Activated CD4-positive, alpha-beta T cell treated with anti-CD3 and anti-CD28 coated beads, Interleukin-2, amount 10 ng/mL, durations not matched to agents 7 days and 5 days (primary cell): ENCODE measurements at regions of chr19 and their contacts with region 1.

Region 1: DNA sequence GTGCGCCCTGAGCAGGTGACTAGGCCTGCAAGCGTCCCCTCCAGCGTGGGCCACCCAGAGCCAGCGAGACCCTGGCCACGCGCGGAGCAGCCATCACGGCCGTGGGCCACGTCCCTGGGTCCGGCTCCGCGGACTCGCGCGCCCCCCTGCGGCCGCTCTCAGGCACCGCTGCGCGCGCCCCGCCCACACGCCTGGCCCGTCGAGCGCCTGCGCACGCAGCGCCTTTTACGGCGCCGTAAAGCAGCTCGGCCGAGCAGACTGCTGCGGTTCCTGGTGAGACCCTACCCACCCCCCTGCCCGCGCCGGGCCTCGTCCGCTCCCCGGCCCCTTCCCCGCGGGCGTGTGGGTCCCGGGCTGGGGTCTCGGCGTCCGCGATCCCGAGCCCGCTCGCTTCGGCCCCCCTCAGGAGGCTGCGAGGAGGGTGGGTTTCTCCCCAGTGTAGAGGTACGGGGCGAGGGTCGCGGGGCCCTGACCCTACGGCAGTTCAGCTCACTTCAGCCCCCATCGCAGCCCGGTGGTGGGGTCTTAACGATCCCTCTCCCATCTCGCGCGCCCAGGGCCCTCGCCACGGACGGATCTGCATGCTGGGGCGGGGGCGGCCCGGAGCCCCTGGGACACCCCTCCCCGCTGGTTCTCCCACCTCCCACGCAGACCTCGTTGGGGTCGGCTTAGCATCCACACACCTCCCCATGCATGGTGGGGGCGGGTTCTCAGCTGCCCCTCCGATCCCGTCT is at the start of gene TRAPPC5:
- DNase-seq: peak; percentile 84
- H3K4me3 Mint-ChIP-seq: peak within 1 kb of the TSS; percentile 89
- H3K27ac Mint-ChIP-seq: peak within 1 kb of the TSS; percentile 96
- H3K4me1 Mint-ChIP-seq: peaks cover 51% of the 10 kb centered on the region
- H3K27me3 Mint-ChIP-seq: peaks cover 17% of the 10 kb centered on the region
- total RNA-seq, gene TRAPPC5: 105 to 106 TPM

Region 2: GRCh38 chr19:7562646-7563393 is 118.0 kb before region 1 on chr19:
- CTCF ChIA-PET with region 1: interaction called, 15 read pairs
- POLR2A ChIA-PET with region 1: interaction called, 3 read pairs
- DNase-seq: no peak
- H3K4me3 Mint-ChIP-seq: no peak overlapping the region
- H3K27ac Mint-ChIP-seq: no peak overlapping the region
- H3K4me1 Mint-ChIP-seq: peaks cover 4% of the 10 kb centered on the region
- H3K27me3 Mint-ChIP-seq: no peaks in the 10 kb centered on the region

Region 3: GRCh38 chr19:7661744-7662538 is 18.8 kb before region 1 on chr19:
- CTCF ChIA-PET with region 1: interaction called, 13 read pairs
- POLR2A ChIA-PET with region 1: no interaction called
- DNase-seq: no peak
- H3K4me3 Mint-ChIP-seq: no peak overlapping the region
- H3K27ac Mint-ChIP-seq: no peak overlapping the region
- H3K4me1 Mint-ChIP-seq: peaks cover 21% of the 10 kb centered on the region
- H3K27me3 Mint-ChIP-seq: peaks cover 3% of the 10 kb centered on the region

Region 4: GRCh38 chr19:7705387-7706187 is 24.8 kb after region 1 on chr19:
- CTCF ChIA-PET with region 1: interaction called, 10 read pairs
- POLR2A ChIA-PET with region 1: interaction called, 3 read pairs
- DNase-seq: peak; percentile 78
- H3K4me3 Mint-ChIP-seq: peak overlapping the region; percentile 34
- H3K27ac Mint-ChIP-seq: peak overlapping the region; percentile 92
- H3K4me1 Mint-ChIP-seq: peaks cover 32% of the 10 kb centered on the region
- H3K27me3 Mint-ChIP-seq: peaks cover 7% of the 10 kb centered on the region

Region 5: DNA sequence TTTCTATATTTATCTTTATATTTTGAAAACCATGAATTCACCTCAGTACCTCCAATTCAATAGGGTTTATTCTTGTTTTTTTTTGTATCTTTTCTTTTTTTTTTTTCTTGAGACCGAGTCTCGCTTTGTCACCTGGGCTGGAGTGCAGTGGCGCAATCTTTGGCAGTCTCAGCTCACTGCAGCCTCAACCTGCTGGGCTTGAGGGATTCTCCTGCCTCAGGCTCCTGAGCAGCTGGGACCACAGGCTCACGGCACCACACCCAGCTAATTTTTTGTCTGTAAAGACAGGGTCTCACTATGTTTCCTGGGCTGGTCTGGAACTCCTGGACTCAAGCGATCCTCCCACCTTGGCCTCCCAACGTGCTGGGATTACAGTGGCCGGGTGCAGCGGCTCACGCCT is 126.1 kb after region 1 on chr19:
- CTCF ChIA-PET with region 1: interaction called, 17 read pairs
- POLR2A ChIA-PET with region 1: no interaction called
- DNase-seq: no peak
- H3K4me3 Mint-ChIP-seq: no peak overlapping the region
- H3K27ac Mint-ChIP-seq: no peak overlapping the region
- H3K4me1 Mint-ChIP-seq: peaks cover 14% of the 10 kb centered on the region
- H3K27me3 Mint-ChIP-seq: peaks cover 28% of the 10 kb centered on the region

Region 6: DNA sequence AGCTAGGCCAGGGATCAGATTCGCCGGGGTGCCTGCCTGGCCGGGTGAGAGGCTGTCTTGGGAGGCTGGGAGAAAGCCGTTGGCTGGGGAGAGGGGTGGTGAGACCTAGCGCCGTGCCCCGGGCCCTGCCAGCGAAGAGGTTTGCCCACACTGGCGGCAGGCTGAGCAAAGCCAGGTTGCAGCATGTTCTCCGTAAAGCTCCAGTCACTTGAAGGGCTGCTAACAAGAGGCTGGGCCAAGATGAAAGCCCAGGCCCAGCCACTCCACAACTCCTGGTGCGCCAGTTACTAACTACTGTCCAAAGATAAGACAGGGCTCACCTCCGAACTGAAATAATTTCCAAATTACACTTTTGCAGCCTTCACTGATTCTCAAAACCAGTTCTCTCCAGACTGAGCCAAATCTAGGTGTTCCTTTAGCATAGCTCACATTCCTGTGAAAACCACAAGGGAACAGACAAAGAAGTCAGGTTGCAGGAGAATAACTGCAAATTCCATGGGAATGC is 308.4 kb after region 1 on chr19:
- CTCF ChIA-PET with region 1: no interaction called
- POLR2A ChIA-PET with region 1: no interaction called
- DNase-seq: no peak
- H3K4me3 Mint-ChIP-seq: no peak overlapping the region
- H3K27ac Mint-ChIP-seq: no peak overlapping the region
- H3K4me1 Mint-ChIP-seq: peaks cover 7% of the 10 kb centered on the region
- H3K27me3 Mint-ChIP-seq: no peaks in the 10 kb centered on the region